ENCODE measurements at regions of chr11 and their contacts with region 1.

Region 1: GRCh38 chr11:61899146-61899841 is 7.9 kb upstream of the FADS3 start:
- DNase-seq: peak; percentile 94
- ATAC-seq: peak; percentile 85
- H3K4me3 ChIP-seq: no peak overlapping the region
- H3K27ac ChIP-seq: no peak overlapping the region
- H3K4me1 ChIP-seq: no peaks in the 10 kb centered on the region
- H3K27me3 ChIP-seq: no peaks in the 10 kb centered on the region
- CTCF ChIP-seq: peak; percentile 99

Region 2: DNA sequence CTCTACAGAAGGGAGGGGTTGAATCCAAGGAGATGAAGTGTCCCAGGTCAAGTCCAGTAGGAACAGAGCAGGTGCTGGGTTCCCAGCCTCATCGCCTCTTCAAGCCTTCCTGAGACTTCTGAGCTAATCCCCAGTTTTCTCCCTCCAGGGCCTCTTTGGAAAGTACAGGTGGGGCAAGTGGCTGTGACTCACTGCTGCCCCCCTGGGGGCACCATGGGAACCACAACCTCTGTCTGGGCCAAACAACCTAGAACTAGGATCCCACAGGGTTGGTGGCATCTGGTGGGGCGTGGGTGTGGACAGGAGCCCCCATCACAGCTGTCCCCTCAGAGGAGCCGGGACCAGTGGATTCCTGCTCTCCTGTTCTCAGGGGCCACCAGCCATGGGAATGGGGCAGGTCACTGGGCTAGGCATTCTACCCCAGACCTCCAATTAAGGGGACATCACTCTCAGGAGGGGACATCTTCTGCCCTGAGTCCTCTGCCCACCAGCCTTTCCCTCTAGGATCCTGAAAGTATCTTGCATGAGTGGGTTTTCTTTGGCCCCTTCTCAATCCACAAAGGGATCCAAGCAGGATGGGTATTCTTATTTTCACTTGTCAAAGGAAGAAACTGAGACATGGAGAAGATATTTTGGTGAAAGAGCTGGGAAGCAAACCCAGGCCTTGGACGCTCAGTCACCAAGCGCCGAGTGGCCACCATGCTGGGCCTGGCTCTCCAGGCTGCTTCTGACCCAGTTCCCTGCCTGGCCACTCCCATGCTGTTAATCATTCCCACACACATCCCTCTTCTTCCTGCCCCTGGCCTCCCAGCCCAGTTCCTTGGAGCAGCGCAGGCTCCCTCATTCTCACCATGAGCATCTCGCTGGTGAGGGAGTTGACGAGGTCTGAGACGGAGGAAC is 366.9 kb before region 1 on chr11:
- CTCF ChIA-PET with region 1: no interaction called
- POLR2A ChIA-PET with region 1: no interaction called
- intact Hi-C with region 1: no loop called
- DNase-seq: peak; percentile 73
- ATAC-seq: peak; percentile 55
- H3K4me3 ChIP-seq: no peak overlapping the region
- H3K27ac ChIP-seq: peak overlapping the region; percentile 8; the same call in 1 of the 2 replicates
- H3K4me1 ChIP-seq: peaks cover 10% of the 10 kb centered on the region
- H3K27me3 ChIP-seq: no peaks in the 10 kb centered on the region
- CTCF ChIP-seq: peak; percentile 95

Region 3: GRCh38 chr11:61769169-61769920 is 129.9 kb before region 1 on chr11:
- CTCF ChIA-PET with region 1: no interaction called
- POLR2A ChIA-PET with region 1: no interaction called
- intact Hi-C with region 1: no loop called
- DNase-seq: no peak
- ATAC-seq: no peak
- H3K4me3 ChIP-seq: no peak overlapping the region
- H3K27ac ChIP-seq: no peak overlapping the region
- H3K4me1 ChIP-seq: no peaks in the 10 kb centered on the region
- H3K27me3 ChIP-seq: no peaks in the 10 kb centered on the region
- CTCF ChIP-seq: peak; percentile 14; the same call in 1 of the 2 replicates

Region 4: DNA sequence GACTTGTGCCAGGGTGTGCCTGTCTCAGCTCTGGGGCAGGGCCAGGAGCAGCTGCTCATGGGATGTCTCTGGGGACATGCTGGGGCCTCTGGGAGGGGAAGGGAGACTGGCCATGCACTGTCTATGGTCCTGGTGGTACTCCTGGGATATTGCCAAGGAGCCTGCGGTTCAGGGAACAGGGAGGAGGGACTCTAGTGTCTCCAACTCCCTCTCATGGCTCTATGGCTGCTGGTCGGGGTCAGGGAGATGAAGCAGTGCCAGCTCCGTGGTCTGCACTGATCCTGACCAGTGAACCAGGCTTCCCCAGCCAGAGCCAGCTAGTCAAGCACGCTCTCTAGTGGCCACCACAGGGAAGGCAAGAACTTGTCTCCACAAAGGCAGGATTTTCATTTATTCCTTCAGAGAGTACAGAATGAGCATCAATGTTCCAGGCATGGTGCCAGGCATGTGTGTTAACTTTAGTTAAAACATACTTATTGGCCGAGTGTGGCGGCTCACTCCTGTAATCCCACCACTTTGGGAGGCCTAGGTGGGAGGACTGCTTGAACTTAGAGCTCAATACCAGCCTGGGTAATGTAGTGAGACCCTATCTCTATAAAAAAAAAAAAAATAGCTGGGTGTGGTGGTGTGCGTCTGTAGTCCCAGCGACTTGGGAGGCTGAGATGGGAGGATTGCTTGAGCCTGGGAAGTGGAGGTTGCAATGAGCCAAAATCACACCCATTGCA is 48.4 kb after region 1 on chr11:
- CTCF ChIA-PET with region 1: interaction called, 24 read pairs
- POLR2A ChIA-PET with region 1: no interaction called
- intact Hi-C with region 1: loop called (anchors 1 kb)
- DNase-seq: peak; percentile 92
- ATAC-seq: peak; percentile 85
- H3K4me3 ChIP-seq: no peak overlapping the region
- H3K27ac ChIP-seq: no peak overlapping the region
- H3K4me1 ChIP-seq: peaks cover 7% of the 10 kb centered on the region; the same call in 1 of the 2 replicates
- H3K27me3 ChIP-seq: no peaks in the 10 kb centered on the region
- CTCF ChIP-seq: peak; percentile 97

Region 5: DNA sequence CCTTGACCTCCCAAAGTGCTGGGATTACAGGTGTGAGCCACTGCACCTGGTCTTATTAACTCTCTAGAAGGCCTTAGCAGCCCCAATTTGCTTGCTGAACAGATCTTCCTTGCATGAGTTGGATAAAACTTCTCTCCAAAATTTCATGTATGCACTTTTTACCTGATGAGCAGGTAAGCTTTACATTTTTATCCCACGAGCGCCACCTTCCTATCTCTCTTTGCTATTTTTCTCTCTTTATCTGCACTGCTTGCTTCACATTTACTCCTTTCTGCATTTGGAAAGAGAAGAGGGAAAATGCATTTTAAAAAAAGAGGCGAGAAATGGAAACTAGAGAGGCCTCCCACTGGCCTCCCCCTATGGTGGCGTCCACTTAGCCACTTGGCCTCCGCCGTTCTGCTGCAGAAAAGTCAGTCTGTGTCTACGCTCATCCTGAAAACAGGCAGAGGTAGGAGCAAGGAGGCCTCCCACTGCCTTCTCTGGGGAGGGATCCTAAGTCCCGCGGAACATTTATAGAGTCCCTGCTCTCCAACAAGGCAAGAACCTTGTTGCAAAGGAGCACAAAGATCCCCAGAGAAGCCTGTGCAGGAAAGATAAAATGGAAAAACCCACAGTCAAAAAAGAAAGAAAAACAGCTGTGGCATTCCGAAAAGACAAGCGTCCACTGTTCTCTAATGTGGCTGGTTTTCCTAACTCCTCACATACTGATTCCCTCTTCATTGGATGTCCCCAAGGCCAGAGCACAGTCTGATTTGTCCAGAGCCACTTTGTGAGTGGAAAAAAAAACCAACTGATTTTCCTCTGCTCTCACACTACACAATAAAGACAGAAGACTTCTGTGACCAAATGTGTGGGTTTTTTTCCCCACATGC is 162.3 kb after region 1 on chr11:
- CTCF ChIA-PET with region 1: interaction called, 10 read pairs
- POLR2A ChIA-PET with region 1: interaction called, 5 read pairs
- intact Hi-C with region 1: no loop called
- DNase-seq: peak; percentile 68
- ATAC-seq: peak; percentile 57
- H3K4me3 ChIP-seq: no peak overlapping the region
- H3K27ac ChIP-seq: no peak overlapping the region
- H3K4me1 ChIP-seq: no peaks in the 10 kb centered on the region
- H3K27me3 ChIP-seq: no peaks in the 10 kb centered on the region
- CTCF ChIP-seq: peak; percentile 87

Measured in PC-3 (cell line).